Calu3 (cell line): ENCODE measurements at regions of chr2 and their contacts with region 1.

Region 1: DNA sequence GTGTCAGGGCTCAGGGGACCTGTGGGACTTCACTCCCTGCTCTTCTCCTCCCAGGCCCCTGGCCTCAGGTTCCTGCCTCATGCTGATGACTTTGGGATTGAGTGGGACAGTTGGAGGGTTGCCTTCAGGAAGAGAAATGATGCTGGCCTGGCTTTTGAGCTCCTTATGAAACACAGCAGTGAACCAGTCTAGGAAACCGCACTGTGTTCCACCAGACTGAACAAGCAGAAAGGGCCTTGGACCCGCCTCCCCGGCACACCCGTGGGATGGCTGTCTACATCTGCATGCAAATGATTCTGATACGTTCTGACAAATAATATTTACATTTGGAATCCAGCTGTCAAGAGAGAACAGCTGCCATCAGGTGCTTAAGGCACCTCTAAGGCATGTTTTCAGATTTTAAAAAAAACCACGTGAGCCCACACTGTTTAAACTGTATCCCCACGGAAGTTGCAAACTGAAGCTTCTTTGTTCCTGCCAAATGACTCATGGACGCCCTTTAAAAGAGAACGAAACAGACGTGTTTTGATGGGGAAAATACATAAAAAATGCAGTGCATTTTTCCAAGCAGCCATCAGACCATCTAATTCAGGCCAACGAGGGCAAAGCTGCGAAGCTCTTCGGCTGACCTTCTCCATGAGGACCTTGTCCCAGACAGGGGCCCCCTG is 27.6 kb upstream of the ASAP2 start:
- DNase-seq: peak; percentile 67
- H3K4me3 Mint-ChIP-seq: peak overlapping the region; percentile 55
- H3K27ac Mint-ChIP-seq: peak overlapping the region; percentile 86
- H3K4me1 Mint-ChIP-seq: peaks cover 54% of the 10 kb centered on the region
- H3K27me3 Mint-ChIP-seq: no peaks in the 10 kb centered on the region
- CTCF ChIP-seq: no peak

Region 2: GRCh38 chr2:9273486-9274130 is 94.6 kb after region 1 on chr2:
- CTCF ChIA-PET with region 1: interaction called, 12 read pairs
- intact Hi-C with region 1: no loop called
- DNase-seq: peak; percentile 74
- H3K4me3 Mint-ChIP-seq: peak overlapping the region; percentile 36
- H3K27ac Mint-ChIP-seq: peak overlapping the region; percentile 76
- H3K4me1 Mint-ChIP-seq: peaks cover 80% of the 10 kb centered on the region
- H3K27me3 Mint-ChIP-seq: no peaks in the 10 kb centered on the region
- CTCF ChIP-seq: no peak